Activated CD4-positive, alpha-beta T cell treated with anti-CD3 and anti-CD28 coated beads, Interleukin-2, amount 10 ng/mL, durations not matched to agents 24 days and 14 days (primary cell): ENCODE measurements at regions of chr5 and their contacts with region 1.

Region 1: DNA sequence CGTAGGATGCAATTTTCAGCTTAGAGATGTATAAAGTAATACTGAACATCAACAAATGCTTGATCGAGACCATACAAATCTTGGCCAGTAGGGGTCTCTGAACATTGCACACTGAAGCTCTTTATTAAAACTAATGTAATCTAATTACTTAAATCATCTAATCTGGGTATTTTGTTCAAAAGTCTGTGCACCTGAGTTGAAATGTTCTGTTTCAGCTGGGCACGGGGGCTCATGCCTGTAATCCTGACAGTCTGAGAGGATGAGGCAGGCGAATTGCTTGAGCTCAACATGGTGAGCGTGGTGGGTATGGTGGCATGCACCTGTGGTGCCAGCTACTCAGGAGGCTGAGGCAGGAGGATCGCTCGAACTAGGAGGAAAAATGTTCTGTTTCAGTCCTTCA is 41.0 kb downstream of the ESM1 start:
- DNase-seq: peak; percentile 84
- H3K4me3 Mint-ChIP-seq: no peak overlapping the region
- H3K27ac Mint-ChIP-seq: no peak overlapping the region
- H3K4me1 Mint-ChIP-seq: peaks cover 17% of the 10 kb centered on the region
- H3K27me3 Mint-ChIP-seq: peaks cover 9% of the 10 kb centered on the region

Region 2: DNA sequence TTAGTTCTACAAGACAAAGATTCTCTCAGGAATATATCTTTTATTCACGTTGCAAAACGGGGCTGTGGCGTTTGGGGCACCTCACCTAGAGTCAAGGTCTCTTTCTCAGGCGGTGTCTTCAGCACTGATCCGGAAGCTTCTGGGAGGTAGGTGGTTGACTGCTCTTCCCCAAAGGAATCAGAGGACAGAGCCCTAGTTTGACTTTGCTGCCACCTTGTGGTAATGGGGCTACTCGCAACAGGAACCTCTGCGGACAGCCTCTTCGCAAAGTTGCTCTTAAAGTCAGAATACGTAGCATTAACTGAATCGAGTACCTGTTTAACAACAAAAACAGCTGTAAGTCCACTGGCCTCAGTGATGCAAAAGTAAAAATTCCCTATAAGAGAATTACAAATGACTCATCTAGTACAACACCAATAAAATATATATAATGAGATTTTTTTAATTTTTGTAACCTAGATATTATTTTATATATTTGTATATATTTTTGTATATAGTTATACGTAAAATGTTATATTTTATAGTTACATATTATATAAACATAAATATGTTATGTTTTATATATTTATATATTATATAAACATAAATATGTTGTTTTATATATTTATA is 202.3 kb after region 1 on chr5:
- intact Hi-C with region 1: loop called (anchors 1 kb)
- DNase-seq: peak; percentile 96
- H3K4me3 Mint-ChIP-seq: peak overlapping the region; percentile 53
- H3K27ac Mint-ChIP-seq: peak overlapping the region; percentile 62
- H3K4me1 Mint-ChIP-seq: peaks cover 32% of the 10 kb centered on the region
- H3K27me3 Mint-ChIP-seq: peaks cover 46% of the 10 kb centered on the region